ENCODE measurements at regions of chr14 and their contacts with region 1.

Region 1: DNA sequence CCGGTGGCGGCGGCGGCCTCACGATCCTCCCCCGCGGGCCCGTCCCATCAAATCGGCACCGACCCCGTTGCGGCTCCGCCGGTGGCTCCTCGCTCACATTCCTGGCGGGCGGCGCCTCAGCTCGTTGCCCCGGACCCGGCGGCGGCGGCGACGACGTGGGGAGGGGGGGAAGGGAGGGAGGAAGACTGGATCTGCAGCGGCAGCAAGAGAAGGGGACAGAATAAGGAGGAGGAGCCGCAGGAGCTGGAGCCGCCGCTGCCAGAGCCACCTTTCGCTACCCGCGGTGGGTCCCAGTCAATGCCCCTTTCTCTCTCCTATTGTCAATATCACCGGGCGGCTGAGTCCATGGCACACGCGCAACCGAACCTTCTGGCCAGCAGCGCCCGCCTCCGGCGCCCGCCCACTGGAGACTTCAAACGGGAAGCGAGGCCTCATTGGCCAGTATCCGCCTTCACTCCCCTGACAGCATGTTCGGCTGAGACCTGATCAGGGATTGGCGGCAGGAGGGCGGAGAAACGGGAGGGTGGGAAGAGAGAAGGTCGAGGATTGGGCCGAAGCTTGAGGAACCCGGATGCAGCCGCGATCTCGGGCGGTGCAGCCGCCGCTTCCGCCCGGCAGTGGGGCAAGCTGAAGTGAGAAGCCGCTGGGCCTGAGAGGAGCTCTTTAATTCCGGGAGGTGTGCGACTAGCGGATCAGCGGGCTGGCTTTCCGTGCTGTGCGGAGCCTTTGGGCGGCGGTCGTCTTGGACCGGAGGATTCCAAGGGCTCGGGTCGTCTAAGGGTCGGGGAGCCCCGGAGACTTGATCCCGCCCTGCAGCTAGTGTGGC is at the start of gene PPP2R5E:
- DNase-seq: peak; percentile 99
- H3K4me3 Mint-ChIP-seq: peak within 1 kb of the TSS; percentile 88
- H3K27ac Mint-ChIP-seq: peak within 1 kb of the TSS; percentile 92
- H3K4me1 Mint-ChIP-seq: peaks cover 21% of the 10 kb centered on the region
- H3K27me3 Mint-ChIP-seq: peaks cover 1% of the 10 kb centered on the region
- total RNA-seq, gene PPP2R5E: 45.1 and 45.7 TPM in 2 replicates

Region 2: DNA sequence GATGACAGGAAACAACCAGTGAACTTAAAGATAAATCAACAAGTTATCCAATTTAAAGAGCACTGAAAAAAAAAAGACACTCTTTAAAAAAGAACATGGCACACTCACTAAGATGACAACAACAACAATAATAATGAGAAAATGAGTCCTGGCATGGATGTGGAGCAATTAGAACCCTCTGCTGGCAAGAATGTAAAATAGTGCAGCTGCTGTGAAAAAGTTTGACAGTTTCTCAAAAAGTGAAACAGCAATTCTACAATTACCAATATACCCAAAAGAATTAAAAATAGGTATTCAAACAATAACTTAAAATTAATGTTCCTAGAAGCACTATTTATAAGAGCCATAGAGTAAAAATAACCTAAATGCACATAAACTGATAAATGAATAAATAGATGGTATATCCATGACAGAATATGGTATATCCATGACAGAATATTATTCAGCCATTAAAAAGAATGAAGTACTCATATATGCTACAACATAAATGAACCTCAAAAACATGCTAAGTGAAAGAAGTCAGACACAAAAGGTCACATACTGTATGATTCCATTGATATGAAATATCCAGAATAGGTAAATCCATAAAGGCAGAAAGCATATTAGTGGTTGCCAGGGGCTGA is 175.4 kb before region 1 on chr14:
- intact Hi-C with region 1: no loop called
- DNase-seq: no peak
- H3K4me3 Mint-ChIP-seq: no peak overlapping the region
- H3K27ac Mint-ChIP-seq: no peak overlapping the region
- H3K4me1 Mint-ChIP-seq: no peaks in the 10 kb centered on the region
- H3K27me3 Mint-ChIP-seq: peaks cover 8% of the 10 kb centered on the region

Region 3: GRCh38 chr14:63388763-63389431 is 154.3 kb before region 1 on chr14:
- intact Hi-C with region 1: loop called (anchors 2 kb)
- DNase-seq: peak; percentile 88
- H3K4me3 Mint-ChIP-seq: no peak overlapping the region
- H3K27ac Mint-ChIP-seq: no peak overlapping the region
- H3K4me1 Mint-ChIP-seq: peaks cover 7% of the 10 kb centered on the region
- H3K27me3 Mint-ChIP-seq: no peaks in the 10 kb centered on the region

Region 4: GRCh38 chr14:63437953-63438757 is 105.1 kb before region 1 on chr14:
- intact Hi-C with region 1: loop called (anchors 2 kb)
- DNase-seq: peak; percentile 80
- H3K4me3 Mint-ChIP-seq: peak overlapping the region; percentile 75
- H3K27ac Mint-ChIP-seq: peak overlapping the region; percentile 45
- H3K4me1 Mint-ChIP-seq: peaks cover 46% of the 10 kb centered on the region
- H3K27me3 Mint-ChIP-seq: no peaks in the 10 kb centered on the region

Region 5: GRCh38 chr14:63470962-63471793 is 72.0 kb before region 1 on chr14:
- intact Hi-C with region 1: loop called (anchors 2 kb)
- DNase-seq: no peak
- H3K4me3 Mint-ChIP-seq: peak overlapping the region; percentile 43
- H3K27ac Mint-ChIP-seq: peak overlapping the region; percentile 34
- H3K4me1 Mint-ChIP-seq: peaks cover 39% of the 10 kb centered on the region
- H3K27me3 Mint-ChIP-seq: no peaks in the 10 kb centered on the region

Region 6: DNA sequence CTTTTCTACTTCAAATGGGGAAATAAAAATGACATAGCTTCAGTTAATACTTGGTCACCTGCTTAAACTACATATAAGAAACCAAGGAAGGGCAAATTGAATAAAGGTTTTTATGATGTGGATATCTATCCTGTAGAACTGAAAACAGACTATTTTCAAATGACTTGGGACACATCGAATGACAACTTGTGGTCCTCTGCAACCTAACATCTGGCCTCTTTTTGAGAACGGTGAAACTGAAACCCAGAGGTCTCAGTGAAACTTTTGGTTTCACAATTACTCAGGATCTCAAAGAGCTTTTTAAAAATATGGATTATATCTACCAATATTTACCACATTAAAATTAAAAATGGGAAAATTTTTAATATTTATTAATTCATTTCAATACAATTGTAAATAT is 65.2 kb before region 1 on chr14:
- intact Hi-C with region 1: loop called (anchors 1 kb)
- DNase-seq: peak; percentile 86
- H3K4me3 Mint-ChIP-seq: peak overlapping the region; percentile 42
- H3K27ac Mint-ChIP-seq: peak overlapping the region; percentile 79
- H3K4me1 Mint-ChIP-seq: peaks cover 43% of the 10 kb centered on the region
- H3K27me3 Mint-ChIP-seq: no peaks in the 10 kb centered on the region

Region 7: GRCh38 chr14:63510538-63510937 is 32.7 kb before region 1 on chr14:
- intact Hi-C with region 1: loop called (anchors 2 kb)
- DNase-seq: peak; percentile 74
- H3K4me3 Mint-ChIP-seq: peak overlapping the region; percentile 8
- H3K27ac Mint-ChIP-seq: peak overlapping the region; percentile 64
- H3K4me1 Mint-ChIP-seq: peaks cover 50% of the 10 kb centered on the region
- H3K27me3 Mint-ChIP-seq: no peaks in the 10 kb centered on the region

Region 8: GRCh38 chr14:63727774-63728728 is 184.8 kb after region 1 on chr14 and contains the start of gene SGPP1:
- intact Hi-C with region 1: loop called (anchors 2 kb)
- DNase-seq: peak; percentile 94
- H3K4me3 Mint-ChIP-seq: peak within 1 kb of the TSS; percentile 100
- H3K27ac Mint-ChIP-seq: peak within 1 kb of the TSS; percentile 98
- H3K4me1 Mint-ChIP-seq: peaks cover 31% of the 10 kb centered on the region
- H3K27me3 Mint-ChIP-seq: peaks cover 19% of the 10 kb centered on the region
- total RNA-seq, gene SGPP1: 12.2 and 13.3 TPM in 2 replicates

Region 9: GRCh38 chr14:63777024-63777423 is 233.8 kb after region 1 on chr14:
- intact Hi-C with region 1: no loop called
- DNase-seq: no peak
- H3K4me3 Mint-ChIP-seq: no peak overlapping the region
- H3K27ac Mint-ChIP-seq: no peak overlapping the region
- H3K4me1 Mint-ChIP-seq: peaks cover 3% of the 10 kb centered on the region
- H3K27me3 Mint-ChIP-seq: no peaks in the 10 kb centered on the region